ENCODE measurements at regions of chr2 and their contacts with region 1.

Region 1: GRCh38 chr2:26144953-26145680 is 27.8 kb upstream of the GAREM2 start:
- DNase-seq: peak; percentile 14
- H3K4me3 ChIP-seq: no peak overlapping the region
- CTCF ChIP-seq: peak; percentile 61

Region 2: DNA sequence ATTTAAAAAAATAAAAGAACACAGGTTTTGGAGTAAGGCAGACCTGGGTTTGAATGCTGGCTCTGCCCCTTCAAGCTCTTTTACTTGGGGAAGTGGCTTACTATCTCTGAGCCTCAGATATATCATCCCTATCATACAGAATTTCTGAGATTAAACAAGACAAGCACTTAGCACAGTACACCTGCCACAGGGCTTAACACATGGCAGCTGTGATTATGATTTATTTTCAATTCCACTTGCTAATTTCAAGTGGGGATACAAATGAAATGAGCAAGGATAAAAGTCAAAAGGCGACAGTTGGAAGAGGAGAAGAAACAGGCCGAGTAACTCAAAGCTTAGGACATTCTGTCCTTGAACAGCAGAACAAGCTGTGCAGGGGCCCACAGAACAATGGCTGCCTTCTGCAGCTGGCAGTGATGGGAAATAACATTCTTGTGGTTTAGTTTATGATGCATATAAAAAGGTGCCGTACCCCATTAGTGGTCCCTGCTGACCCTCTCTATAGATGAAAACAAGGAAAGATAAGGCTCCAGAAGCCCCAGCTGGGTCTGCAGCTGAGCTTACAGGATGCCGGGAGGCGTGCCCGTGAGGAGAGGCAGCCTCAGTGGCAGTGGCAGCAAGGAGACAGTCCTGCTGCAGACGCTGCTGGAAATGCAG is 208.1 kb before region 1 on chr2:
- CTCF ChIA-PET with region 1: interaction called, 11 read pairs
- POLR2A ChIA-PET with region 1: no interaction called
- DNase-seq: no peak
- H3K4me3 ChIP-seq: no peak overlapping the region
- CTCF ChIP-seq: no peak

Region 3: DNA sequence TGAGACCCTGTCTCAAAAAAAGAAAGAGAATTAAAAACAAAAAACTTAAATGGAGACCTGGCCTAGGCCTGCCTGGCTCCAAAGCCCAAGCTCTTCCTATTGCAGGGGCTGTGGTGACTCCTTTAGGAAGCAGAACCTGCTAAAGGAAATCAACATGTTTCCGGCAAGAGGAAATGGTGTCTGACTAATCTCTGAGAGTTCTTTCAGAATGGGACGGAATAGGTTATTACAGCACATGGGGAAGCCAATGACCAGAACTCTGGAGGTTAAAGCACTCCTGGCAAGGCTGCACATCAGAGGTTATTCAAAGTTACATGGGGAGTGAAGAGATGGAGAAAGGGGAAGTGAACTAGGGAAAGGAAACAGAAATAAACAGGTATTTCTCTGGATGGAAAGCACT is 184.2 kb before region 1 on chr2:
- CTCF ChIA-PET with region 1: interaction called, 247 read pairs
- POLR2A ChIA-PET with region 1: no interaction called
- DNase-seq: no peak
- H3K4me3 ChIP-seq: no peak overlapping the region
- CTCF ChIP-seq: no peak

Region 4: DNA sequence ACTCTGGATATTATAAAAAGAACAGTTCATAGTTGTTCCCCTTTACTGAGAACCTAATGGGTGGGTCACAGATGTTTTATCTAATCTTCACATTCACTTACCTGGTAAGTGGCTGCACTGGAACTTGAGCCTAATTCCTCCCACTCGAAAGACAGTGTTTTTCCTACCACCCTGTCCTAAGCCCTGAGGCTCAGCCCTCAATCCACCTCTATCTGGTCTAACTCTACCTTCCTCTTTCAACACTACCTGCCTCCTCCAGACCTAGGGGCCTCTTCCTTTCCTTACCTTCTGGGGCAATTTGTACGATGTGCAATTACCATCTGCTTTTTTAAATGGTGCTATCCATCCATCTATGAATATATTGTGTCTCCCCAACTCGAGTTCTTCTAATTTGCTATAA is 153.2 kb before region 1 on chr2:
- CTCF ChIA-PET with region 1: interaction called, 189 read pairs
- POLR2A ChIA-PET with region 1: no interaction called
- DNase-seq: no peak
- H3K4me3 ChIP-seq: no peak overlapping the region
- CTCF ChIP-seq: no peak

Region 5: GRCh38 chr2:26178246-26178645 is 33.1 kb after region 1 on chr2:
- CTCF ChIA-PET with region 1: no interaction called
- POLR2A ChIA-PET with region 1: no interaction called
- DNase-seq: no peak
- H3K4me3 ChIP-seq: no peak overlapping the region
- CTCF ChIP-seq: no peak

Region 6: GRCh38 chr2:26216587-26216986 is 71.5 kb after region 1 on chr2:
- CTCF ChIA-PET with region 1: no interaction called
- POLR2A ChIA-PET with region 1: no interaction called
- DNase-seq: no peak
- H3K4me3 ChIP-seq: no peak overlapping the region
- CTCF ChIP-seq: no peak